ENCODE measurements at regions of chr20 and their contacts with region 1.

Region 1: DNA sequence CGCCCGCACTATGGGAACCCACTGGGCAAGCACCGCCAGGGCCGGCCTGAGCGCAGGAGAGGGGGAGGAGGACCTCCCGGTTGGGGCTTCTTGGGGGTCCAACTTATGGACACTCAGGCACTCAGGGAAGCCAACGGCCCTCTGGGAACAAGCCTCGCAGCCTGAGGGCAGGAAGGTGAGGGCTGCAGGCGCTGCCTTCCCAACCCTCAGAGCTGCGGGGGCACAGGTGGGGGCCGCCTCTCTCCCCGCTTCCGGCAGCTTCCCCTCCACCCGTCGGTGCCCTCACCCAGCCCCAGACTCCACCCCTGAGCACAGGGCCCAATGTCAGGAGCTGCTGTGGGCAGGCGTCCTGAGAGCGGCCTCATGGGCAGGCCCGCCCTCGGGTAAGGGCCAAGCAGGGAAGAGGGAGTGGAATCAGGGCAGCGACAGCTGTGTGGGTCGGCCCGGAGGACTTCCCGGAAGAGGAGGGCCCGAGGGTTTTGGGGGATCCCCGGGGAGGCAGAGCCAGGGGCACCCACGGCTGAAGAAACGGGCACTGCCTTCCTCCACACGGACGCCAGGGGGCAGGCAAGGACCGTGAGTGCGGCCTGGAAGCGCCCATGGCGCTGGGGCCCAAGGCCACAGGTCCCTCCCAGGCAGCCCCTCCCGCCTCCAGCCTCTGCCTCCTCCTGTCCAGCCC is 488 bp upstream of the PTK6 start:
- DNase-seq: peak; percentile 90
- ATAC-seq: peak; percentile 93
- H3K4me3 ChIP-seq: peak overlapping the region; percentile 46 to 70
- H3K27ac ChIP-seq: peak overlapping the region; percentile 88
- H3K4me1 ChIP-seq: peaks cover 17% of the 10 kb centered on the region
- H3K27me3 ChIP-seq: no peaks in the 10 kb centered on the region
- CTCF ChIP-seq: peak; percentile 95

Region 2: DNA sequence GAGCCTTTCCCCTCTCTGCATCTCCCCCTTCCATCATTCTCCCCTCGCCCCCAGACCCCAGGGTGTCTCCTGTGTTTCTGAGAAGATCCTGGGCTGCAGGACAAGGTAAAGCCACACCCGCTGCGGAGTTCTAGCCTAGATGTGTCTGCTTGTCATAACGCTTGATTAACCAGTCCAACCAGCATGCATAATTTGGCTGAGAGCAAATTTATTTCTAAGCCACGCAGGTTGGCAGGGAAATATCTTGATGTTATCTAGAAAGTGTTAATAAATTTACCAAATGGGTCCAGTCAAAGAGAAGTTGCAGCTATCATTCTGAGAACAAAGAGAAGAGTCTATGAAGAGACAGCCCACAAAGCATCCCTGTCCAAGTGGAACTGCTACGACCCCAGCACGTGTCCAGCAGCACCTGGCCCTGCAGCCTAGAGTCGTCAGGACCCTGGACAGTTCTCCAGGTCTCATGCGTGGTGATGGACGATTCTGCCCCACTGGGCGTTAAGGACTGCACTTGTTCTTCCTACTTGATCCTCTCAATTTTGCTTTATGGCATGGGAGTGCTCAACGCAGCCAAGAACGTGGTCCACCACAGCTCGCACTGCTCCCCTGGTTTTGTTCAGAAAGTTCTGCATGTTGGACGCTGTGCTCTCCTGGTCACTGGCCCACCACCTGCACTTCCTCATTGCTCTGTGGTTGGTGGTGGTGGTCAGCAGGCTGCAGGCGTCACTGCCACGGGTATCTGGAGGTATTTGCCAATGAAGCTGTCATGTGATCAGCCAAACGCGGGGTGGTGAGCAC is 1929.4 kb before region 1 on chr20:
- CTCF ChIA-PET with region 1: no interaction called
- POLR2A ChIA-PET with region 1: no interaction called
- in situ Hi-C with region 1: no loop called
- intact Hi-C with region 1: no loop called
- DNase-seq: no peak
- ATAC-seq: no peak
- H3K4me3 ChIP-seq: no peak overlapping the region
- H3K27ac ChIP-seq: no peak overlapping the region
- H3K4me1 ChIP-seq: no peaks in the 10 kb centered on the region
- H3K27me3 ChIP-seq: no peaks in the 10 kb centered on the region; the same call in 1 of the 2 replicates
- CTCF ChIP-seq: no peak

Region 3: GRCh38 chr20:63520504-63520933 is 17.1 kb before region 1 on chr20 and contains the start of gene PPDPF:
- CTCF ChIA-PET with region 1: interaction called, 10 read pairs
- POLR2A ChIA-PET with region 1: interaction called, 5 read pairs
- in situ Hi-C with region 1: no loop called
- intact Hi-C with region 1: no loop called
- DNase-seq: no peak
- ATAC-seq: peak; percentile 86
- H3K4me3 ChIP-seq: peak within 1 kb of the TSS; percentile 79 to 80
- H3K27ac ChIP-seq: peak within 1 kb of the TSS; percentile 80
- H3K4me1 ChIP-seq: peaks cover 7% of the 10 kb centered on the region
- H3K27me3 ChIP-seq: no peaks in the 10 kb centered on the region
- CTCF ChIP-seq: no peak
- total RNA-seq, gene PPDPF: 241 TPM

Region 4: GRCh38 chr20:63627129-63627750 is 89.6 kb after region 1 on chr20:
- CTCF ChIA-PET with region 1: interaction called, 10 read pairs
- POLR2A ChIA-PET with region 1: no interaction called
- in situ Hi-C with region 1: no loop called
- intact Hi-C with region 1: no loop called
- DNase-seq: peak; percentile 43
- ATAC-seq: peak; percentile 89
- H3K4me3 ChIP-seq: peak overlapping the region; percentile 79 to 83
- H3K27ac ChIP-seq: peak overlapping the region; percentile 65
- H3K4me1 ChIP-seq: 0 out of 2 replicates have a peak, but pooled peaks cover 2% of the 10 kb centered on the region
- H3K27me3 ChIP-seq: no peaks in the 10 kb centered on the region
- CTCF ChIP-seq: no peak

Region 5: GRCh38 chr20:63740627-63741354 is 203.1 kb after region 1 on chr20:
- CTCF ChIA-PET with region 1: interaction called, 3 read pairs
- POLR2A ChIA-PET with region 1: interaction called, 16 read pairs
- in situ Hi-C with region 1: no loop called
- intact Hi-C with region 1: no loop called
- DNase-seq: no peak
- ATAC-seq: peak; percentile 50
- H3K4me3 ChIP-seq: peak overlapping the region; percentile 63 to 66
- H3K27ac ChIP-seq: peak overlapping the region; percentile 77
- H3K4me1 ChIP-seq: peaks cover 36% of the 10 kb centered on the region
- H3K27me3 ChIP-seq: no peaks in the 10 kb centered on the region
- CTCF ChIP-seq: no peak

Region 6: GRCh38 chr20:63973636-63974402 is 436.2 kb after region 1 on chr20:
- CTCF ChIA-PET with region 1: interaction called, 14 read pairs
- POLR2A ChIA-PET with region 1: no interaction called
- in situ Hi-C with region 1: no loop called
- intact Hi-C with region 1: no loop called
- DNase-seq: no peak
- ATAC-seq: peak; percentile 81
- H3K4me3 ChIP-seq: peak overlapping the region; percentile 39 to 55
- H3K27ac ChIP-seq: peak overlapping the region; percentile 72
- H3K4me1 ChIP-seq: peaks cover 38% of the 10 kb centered on the region
- H3K27me3 ChIP-seq: no peaks in the 10 kb centered on the region
- CTCF ChIP-seq: peak; percentile 100